H1 (cell line): ENCODE measurements at regions of chr6 and their contacts with region 1.

Region 1: DNA sequence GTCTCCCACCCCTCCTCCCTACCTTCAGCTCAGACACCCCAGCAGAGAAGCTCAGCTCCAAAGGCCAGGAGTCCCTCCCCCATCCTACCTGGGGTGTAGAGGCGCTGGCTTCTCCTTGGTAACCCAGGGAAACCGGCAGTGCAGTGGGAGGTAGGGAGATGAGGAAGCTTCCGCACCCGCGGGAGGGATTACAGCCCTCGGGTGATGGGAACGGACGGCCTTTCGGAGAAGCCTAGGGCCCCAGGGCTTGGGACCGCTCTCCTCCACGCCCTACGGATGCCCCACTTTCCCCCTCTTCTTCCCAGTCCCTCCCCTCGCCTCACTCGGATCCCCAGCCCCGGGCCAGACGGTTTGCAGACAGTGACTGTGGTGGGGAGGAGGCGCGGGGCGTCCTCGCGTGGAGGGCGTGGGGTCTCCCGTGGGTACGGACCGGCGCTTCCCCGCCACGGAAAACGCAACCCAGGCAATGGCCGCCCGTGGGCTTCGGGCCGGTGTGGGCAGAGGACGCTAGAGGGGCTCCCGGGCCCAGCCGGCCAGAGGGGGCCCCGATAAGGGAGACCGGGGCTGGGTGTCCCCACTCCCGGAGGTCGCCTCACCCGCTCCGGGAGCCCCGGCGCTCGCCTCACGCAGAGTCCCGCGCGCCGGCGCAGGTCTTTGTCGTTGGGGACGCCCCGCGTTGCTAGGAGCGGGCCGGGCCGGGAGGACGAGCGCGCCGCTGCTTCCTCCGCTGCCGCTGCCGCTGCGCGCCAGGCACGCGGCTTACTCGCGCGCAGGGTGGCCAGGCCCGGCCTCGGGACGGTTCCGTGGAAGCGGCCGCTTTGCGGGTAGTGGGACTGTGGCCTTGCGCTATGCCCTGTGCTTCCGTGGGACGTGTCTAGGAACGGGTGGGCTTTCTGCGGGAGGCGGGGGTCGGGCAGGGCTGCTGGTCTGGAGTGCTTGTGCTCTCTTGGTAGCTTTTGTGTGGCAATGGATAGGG is 15.8 kb downstream of the AARS2 start:
- DNase-seq: peak in 1 of 2 experiments; percentile 87
- H3K4me3 ChIP-seq: peak overlapping the region; percentile 44 to 83 (median 68)
- H3K27ac ChIP-seq: no peak overlapping the region
- H3K4me1 ChIP-seq: peaks cover 0 to 5% (median 4%) of the 10 kb centered on the region in 4 experiments; a peak in 4 of 7 replicates
- H3K27me3 ChIP-seq: peaks cover 0 to 19% (median 14%) of the 10 kb centered on the region in 4 experiments; a peak in 6 of 7 replicates
- CTCF ChIP-seq: no peak
- EP300 ChIP-seq: no peak
- POLR2A ChIP-seq: peak in 1 of 2 experiments; percentile 38; a peak in 1 of 3 replicates
- RAD21 ChIP-seq: no peak

Region 2: GRCh38 chr6:44257025-44257752 is 40.2 kb before region 1 on chr6 and contains the start of gene SLC35B2:
- CTCF ChIA-PET with region 1: interaction called, 330 read pairs
- POLR2A ChIA-PET with region 1: interaction called, 59 read pairs
- DNase-seq: peak in 1 of 2 experiments; percentile 85
- H3K4me3 ChIP-seq: peak within 1 kb of the TSS; percentile 67 to 85 (median 75)
- H3K27ac ChIP-seq: peak within 1 kb of the TSS; percentile 88
- H3K4me1 ChIP-seq: peaks cover 1 to 20% (median 7%) of the 10 kb centered on the region in 4 experiments; a peak in 6 of 7 replicates
- H3K27me3 ChIP-seq: no peaks in the 10 kb centered on the region
- CTCF ChIP-seq: peak in 2 of 3 experiments; percentile 70 to 91; a peak in 3 of 4 replicates
- EP300 ChIP-seq: peak; percentile 21 to 23; a peak in 2 of 3 replicates
- POLR2A ChIP-seq: peak in 1 of 2 experiments; percentile 67; a peak in 1 of 3 replicates
- RAD21 ChIP-seq: peak; percentile 6 to 59; a peak in 3 of 4 replicates
- total RNA-seq, gene SLC35B2: 29.5 and 32.3 TPM in 2 replicates

Region 3: GRCh38 chr6:44275749-44276648 is 21.4 kb before region 1 on chr6:
- CTCF ChIA-PET with region 1: interaction called, 330 read pairs
- POLR2A ChIA-PET with region 1: interaction called, 102 read pairs
- DNase-seq: no peak
- H3K4me3 ChIP-seq: no peak overlapping the region
- H3K27ac ChIP-seq: no peak overlapping the region
- H3K4me1 ChIP-seq: peaks cover 5 to 16% (median 9%) of the 10 kb centered on the region in 4 experiments
- H3K27me3 ChIP-seq: peaks cover 0 to 3% (median 0%) of the 10 kb centered on the region in 4 experiments; a peak in 1 of 7 replicates
- CTCF ChIP-seq: no peak
- EP300 ChIP-seq: no peak
- POLR2A ChIP-seq: no peak
- RAD21 ChIP-seq: no peak

Region 4: GRCh38 chr6:44285552-44286284 is 11.6 kb before region 1 on chr6:
- CTCF ChIA-PET with region 1: interaction called, 26 read pairs
- POLR2A ChIA-PET with region 1: interaction called, 48 read pairs
- DNase-seq: peak in 1 of 2 experiments; percentile 65
- H3K4me3 ChIP-seq: no peak overlapping the region
- H3K27ac ChIP-seq: no peak overlapping the region
- H3K4me1 ChIP-seq: no peaks in the 10 kb centered on the region
- H3K27me3 ChIP-seq: peaks cover 0 to 4% (median 1%) of the 10 kb centered on the region in 4 experiments; a peak in 3 of 7 replicates
- CTCF ChIP-seq: no peak
- EP300 ChIP-seq: no peak
- POLR2A ChIP-seq: no peak
- RAD21 ChIP-seq: no peak

Region 5: GRCh38 chr6:44312901-44313788 is 15.8 kb after region 1 on chr6 and contains the start of gene AARS2:
- CTCF ChIA-PET with region 1: interaction called, 108 read pairs
- POLR2A ChIA-PET with region 1: interaction called, 81 read pairs
- DNase-seq: peak; percentile 68 to 99
- H3K4me3 ChIP-seq: peak within 1 kb of the TSS; percentile 66 to 91 (median 88)
- H3K27ac ChIP-seq: peak within 1 kb of the TSS; percentile 64; the same call in 1 of the 2 replicates
- H3K4me1 ChIP-seq: peaks cover 3 to 6% (median 3%) of the 10 kb centered on the region in 4 experiments
- H3K27me3 ChIP-seq: peaks cover 0 to 1% (median 0%) of the 10 kb centered on the region in 4 experiments; a peak in 1 of 7 replicates
- CTCF ChIP-seq: peak; percentile 91 to 97 (median 95)
- EP300 ChIP-seq: peak in 1 of 2 experiments; percentile 21; a peak in 1 of 3 replicates
- POLR2A ChIP-seq: peak; percentile 94 to 98
- RAD21 ChIP-seq: peak; percentile 5 to 36; a peak in 2 of 4 replicates
- total RNA-seq, gene AARS2: 19.9 and 20.4 TPM in 2 replicates